ENCODE measurements at regions of chr16 and their contacts with region 1.

Region 1: GRCh38 chr16:66608241-66609138 is 4.0 kb downstream of the CMTM3 start:
- DNase-seq: no peak
- ATAC-seq: peak; percentile 53
- H3K4me3 ChIP-seq: no peak overlapping the region
- H3K27ac ChIP-seq: no peak overlapping the region
- H3K4me1 ChIP-seq: peaks cover 15% of the 10 kb centered on the region
- H3K27me3 ChIP-seq: no peaks in the 10 kb centered on the region
- CTCF ChIP-seq: peak; percentile 91 to 95 (median 92)
- EP300 ChIP-seq: no peak
- POLR2A ChIP-seq: no peak; the same call in 1 of the 2 replicates
- RAD21 ChIP-seq: peak; percentile 58

Region 2: DNA sequence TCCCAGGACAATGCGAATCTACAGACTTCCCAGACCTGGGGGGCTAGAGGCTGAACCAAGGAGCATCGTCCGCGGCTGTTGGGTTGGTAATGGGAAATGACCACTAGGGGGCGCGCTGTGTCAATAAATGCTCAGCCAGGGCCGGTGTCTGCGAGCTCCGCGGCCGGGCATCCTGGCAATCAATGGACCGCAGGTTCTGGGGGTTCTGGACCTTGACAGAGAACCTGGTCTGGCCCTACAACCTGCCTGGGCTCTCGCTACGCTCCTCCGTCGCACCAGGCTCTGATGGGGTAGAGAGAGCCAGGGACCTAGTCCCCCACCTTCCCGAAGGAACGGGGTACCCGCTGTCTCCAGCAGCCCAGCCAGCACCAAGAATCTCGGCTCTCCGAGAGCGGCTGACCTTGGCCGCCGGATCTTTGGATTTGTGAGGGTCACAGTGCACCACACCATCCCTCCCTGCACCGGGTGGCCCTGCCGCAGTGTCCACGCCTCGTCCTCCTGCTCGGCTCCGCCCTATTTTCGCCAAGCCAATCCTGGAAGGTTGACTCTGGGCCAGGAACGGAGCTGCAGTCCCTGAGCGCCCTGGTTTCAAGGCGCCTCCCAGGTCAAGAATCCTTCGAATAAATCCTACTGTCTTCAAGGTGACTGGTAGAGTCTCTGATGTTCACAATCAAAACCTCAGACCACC is 201.8 kb before region 1 on chr16:
- CTCF ChIA-PET with region 1: interaction called, 8 read pairs
- POLR2A ChIA-PET with region 1: no interaction called
- RAD21 ChIA-PET with region 1: interaction called, 3 read pairs
- SMC1A ChIA-PET with region 1: interaction called, 10 read pairs
- in situ Hi-C with region 1: no loop called
- intact Hi-C with region 1: loop called (anchors 1 kb)
- DNase-seq: no peak
- ATAC-seq: peak; percentile 97
- H3K4me3 ChIP-seq: peak overlapping the region; percentile 2; the same call in 1 of the 2 replicates
- H3K27ac ChIP-seq: no peak overlapping the region
- H3K4me1 ChIP-seq: peaks cover 4% of the 10 kb centered on the region; the same call in 1 of the 2 replicates
- H3K27me3 ChIP-seq: peaks cover 2% of the 10 kb centered on the region in 2 experiments; a peak in 2 of 4 replicates
- CTCF ChIP-seq: peak; percentile 69 to 93 (median 79)
- EP300 ChIP-seq: no peak
- POLR2A ChIP-seq: no peak
- RAD21 ChIP-seq: peak; percentile 85

Region 3: DNA sequence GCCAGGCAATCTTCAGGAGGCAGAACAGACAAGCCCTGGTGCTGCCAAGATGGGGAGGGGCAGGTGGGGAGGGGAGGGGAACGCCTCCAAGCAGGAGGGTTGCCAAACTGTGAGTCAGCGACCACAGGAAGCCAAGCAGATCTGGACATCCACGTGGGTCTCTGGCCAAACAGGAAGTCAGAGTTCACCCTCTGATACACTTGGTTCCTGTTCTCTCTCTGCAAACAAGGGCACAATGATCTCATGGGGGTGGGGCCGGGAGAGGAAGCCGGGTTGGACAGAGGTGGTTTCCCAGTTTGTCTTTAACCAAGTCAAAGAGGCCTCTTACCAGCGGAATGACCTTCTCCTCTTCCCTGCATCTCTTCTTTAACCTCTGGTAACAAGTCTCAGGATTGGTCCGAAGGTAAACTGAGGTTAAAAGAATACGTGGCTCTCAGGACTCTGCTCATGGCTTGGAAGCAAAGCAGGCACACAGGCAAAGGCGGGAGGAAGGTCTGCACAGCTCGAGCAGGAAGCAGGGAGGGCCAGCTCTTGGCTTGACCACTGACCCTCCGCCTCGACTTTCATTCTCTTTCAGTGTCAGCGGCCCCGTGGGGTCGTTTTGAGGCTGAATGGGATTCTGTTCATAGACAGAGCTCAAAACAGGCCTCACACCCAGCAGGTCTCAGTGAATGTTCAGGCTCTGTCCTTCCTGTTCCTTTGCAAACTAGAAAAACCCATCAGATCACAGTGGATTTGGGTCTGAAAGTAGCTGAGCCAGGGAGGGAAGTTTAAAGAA is 91.5 kb before region 1 on chr16:
- CTCF ChIA-PET with region 1: interaction called, 4 read pairs
- POLR2A ChIA-PET with region 1: no interaction called
- RAD21 ChIA-PET with region 1: interaction called, 5 read pairs
- SMC1A ChIA-PET with region 1: interaction called, 4 read pairs
- in situ Hi-C with region 1: no loop called
- intact Hi-C with region 1: loop called (anchors 2 kb)
- DNase-seq: peak; percentile 98
- ATAC-seq: peak; percentile 95
- H3K4me3 ChIP-seq: peak overlapping the region; percentile 11; the same call in 1 of the 2 replicates
- H3K27ac ChIP-seq: peak overlapping the region; percentile 84
- H3K4me1 ChIP-seq: peaks cover 50% of the 10 kb centered on the region
- H3K27me3 ChIP-seq: no peaks in the 10 kb centered on the region
- CTCF ChIP-seq: no peak
- EP300 ChIP-seq: peak; percentile 70 to 75
- POLR2A ChIP-seq: no peak; the same call in 1 of the 2 replicates
- RAD21 ChIP-seq: 0 out of 2 replicates have a peak, but pooled peaks have one; percentile 0

Region 4: GRCh38 chr16:66562407-66562806 is 46.1 kb before region 1 on chr16:
- CTCF ChIA-PET with region 1: interaction called, 35 read pairs
- POLR2A ChIA-PET with region 1: interaction called, 3 read pairs
- RAD21 ChIA-PET with region 1: interaction called, 5 read pairs
- SMC1A ChIA-PET with region 1: interaction called, 21 read pairs
- in situ Hi-C with region 1: no loop called
- intact Hi-C with region 1: loop called (anchors 2 kb)
- DNase-seq: no peak
- ATAC-seq: peak; percentile 19; the same call in 1 of the 3 replicates
- H3K4me3 ChIP-seq: no peak overlapping the region
- H3K27ac ChIP-seq: no peak overlapping the region
- H3K4me1 ChIP-seq: no peaks in the 10 kb centered on the region
- H3K27me3 ChIP-seq: no peaks in the 10 kb centered on the region
- CTCF ChIP-seq: no peak; a peak in 1 of 6 replicates
- EP300 ChIP-seq: no peak
- POLR2A ChIP-seq: no peak
- RAD21 ChIP-seq: peak; percentile 32

Region 5: DNA sequence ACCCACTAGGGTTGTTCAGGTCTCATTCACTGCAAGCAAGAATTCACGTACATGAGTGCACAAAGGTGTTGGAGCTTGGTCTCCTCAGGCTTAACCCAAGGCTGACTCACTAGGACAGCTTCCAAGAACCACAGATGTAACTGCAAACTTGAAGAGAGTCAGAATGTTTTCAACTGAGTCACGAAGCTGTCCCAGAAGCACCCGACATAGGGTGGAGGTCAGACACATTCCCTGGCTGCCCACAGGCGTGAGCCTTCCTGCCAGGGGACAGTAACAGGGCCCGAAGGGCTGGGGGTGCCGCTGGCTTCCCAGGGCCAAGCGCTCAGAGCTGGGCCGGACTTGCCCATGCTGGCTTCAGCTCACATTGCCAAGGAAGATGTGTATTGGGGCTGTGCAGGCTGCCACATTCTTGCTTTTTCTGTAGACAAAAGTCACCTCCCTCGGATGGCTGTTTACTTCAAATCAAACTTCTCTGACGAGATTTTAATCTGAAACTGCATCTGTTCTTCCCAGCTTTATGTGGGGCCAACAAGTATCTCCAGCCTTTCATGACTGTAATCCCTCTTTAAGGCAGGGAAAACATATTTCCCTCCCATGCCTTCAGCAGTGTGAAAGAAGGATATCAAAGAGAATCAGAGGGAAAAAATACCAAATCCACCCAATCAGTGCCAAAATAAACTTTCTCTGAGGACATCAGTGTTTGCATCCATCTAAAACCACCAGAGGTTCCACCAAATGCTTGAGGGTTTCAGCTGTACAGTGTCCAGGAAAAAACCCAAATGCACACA is 10.3 kb after region 1 on chr16:
- CTCF ChIA-PET with region 1: interaction called, 32 read pairs
- POLR2A ChIA-PET with region 1: no interaction called
- RAD21 ChIA-PET with region 1: no interaction called
- SMC1A ChIA-PET with region 1: interaction called, 3 read pairs
- in situ Hi-C with region 1: no loop called
- intact Hi-C with region 1: no loop called
- DNase-seq: no peak
- ATAC-seq: no peak
- H3K4me3 ChIP-seq: no peak overlapping the region
- H3K27ac ChIP-seq: no peak overlapping the region
- H3K4me1 ChIP-seq: no peaks in the 10 kb centered on the region
- H3K27me3 ChIP-seq: peaks cover 0 to 4% of the 10 kb centered on the region in 2 experiments; a peak in 2 of 4 replicates
- CTCF ChIP-seq: no peak
- EP300 ChIP-seq: no peak
- POLR2A ChIP-seq: no peak
- RAD21 ChIP-seq: no peak

Region 6: GRCh38 chr16:66751303-66751991 is 143.0 kb after region 1 on chr16 and contains the start of gene DYNC1LI2:
- CTCF ChIA-PET with region 1: interaction called, 5 read pairs
- POLR2A ChIA-PET with region 1: no interaction called
- RAD21 ChIA-PET with region 1: no interaction called
- SMC1A ChIA-PET with region 1: no interaction called
- in situ Hi-C with region 1: no loop called
- intact Hi-C with region 1: loop called (anchors 2 kb)
- DNase-seq: no peak
- ATAC-seq: peak; percentile 79
- H3K4me3 ChIP-seq: peak within 1 kb of the TSS; percentile 84
- H3K27ac ChIP-seq: peak within 1 kb of the TSS; percentile 92
- H3K4me1 ChIP-seq: peaks cover 7% of the 10 kb centered on the region
- H3K27me3 ChIP-seq: peaks cover 0 to 3% of the 10 kb centered on the region in 2 experiments; a peak in 1 of 4 replicates
- CTCF ChIP-seq: peak; percentile 70 to 92 (median 72); a peak in 4 of 6 replicates
- EP300 ChIP-seq: no peak
- POLR2A ChIP-seq: peak; percentile 86
- RAD21 ChIP-seq: no peak
- polyA plus RNA-seq, gene DYNC1LI2: 6.0 to 8.3 TPM